RWPE1 (cell line): ENCODE measurements at regions of chr3 and their contacts with region 1.

Region 1: DNA sequence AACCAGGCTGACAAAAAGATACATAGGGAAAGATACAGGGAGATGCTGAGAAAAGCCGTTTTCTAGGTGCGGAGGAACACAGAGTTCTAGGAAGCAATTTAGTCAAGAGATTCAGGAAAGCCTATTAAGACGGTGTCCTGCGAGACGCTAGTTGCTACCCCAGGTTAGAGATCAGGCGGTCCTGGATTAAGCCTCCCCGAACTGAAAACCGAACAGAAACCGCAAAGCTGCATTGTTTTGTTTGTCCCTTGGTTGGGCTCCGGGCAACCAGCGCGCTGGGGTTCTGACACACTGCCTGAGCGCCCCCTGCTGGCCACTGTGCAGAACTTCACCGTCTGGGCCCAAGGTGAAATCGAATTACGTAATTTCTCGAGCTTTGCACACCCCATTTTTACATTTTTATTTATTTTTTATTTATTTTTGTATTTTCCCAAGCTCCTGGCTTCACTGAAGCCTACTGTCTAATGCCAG is 37.3 kb upstream of the NDUFB4 start:
- DNase-seq: peak; percentile 78
- H3K27ac ChIP-seq: peak overlapping the region; percentile 59
- CTCF ChIP-seq: peak; percentile 94

Region 2: GRCh38 chr3:120245386-120245785 is 313.4 kb before region 1 on chr3:
- CTCF ChIA-PET with region 1: interaction called, 15 read pairs
- POLR2A ChIA-PET with region 1: no interaction called
- DNase-seq: no peak
- H3K27ac ChIP-seq: no peak overlapping the region
- CTCF ChIP-seq: no peak

Region 3: DNA sequence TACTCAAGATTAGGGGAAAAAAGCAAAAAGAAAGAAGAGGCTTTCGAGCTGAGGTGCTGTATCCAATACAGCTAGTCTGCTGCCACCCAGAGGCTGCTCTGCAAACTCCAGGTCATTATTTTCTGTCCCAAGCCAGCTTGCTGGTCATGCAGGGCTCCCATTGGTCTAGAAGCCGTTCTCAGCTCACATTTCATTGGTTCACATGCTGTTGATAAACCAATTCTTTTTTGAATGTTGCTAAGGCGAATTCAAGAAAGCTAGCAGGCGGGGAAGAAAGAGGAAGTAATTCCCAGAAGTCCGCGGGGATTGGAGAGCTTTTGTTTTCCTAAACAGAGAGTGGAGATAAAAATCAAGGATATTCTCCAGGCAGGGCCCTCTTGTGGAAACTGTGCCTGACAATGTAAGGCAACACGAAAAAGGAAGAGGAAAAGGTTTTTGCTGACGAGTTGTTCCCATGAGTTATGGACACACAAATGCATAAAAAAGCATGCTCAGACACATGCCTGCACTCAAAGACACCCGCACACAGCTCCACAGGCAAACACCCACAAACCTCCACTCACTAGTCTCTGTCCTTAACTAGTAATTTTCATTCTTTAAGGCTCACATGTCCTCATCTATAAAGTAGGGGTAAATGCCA is 141.4 kb before region 1 on chr3:
- CTCF ChIA-PET with region 1: interaction called, 54 read pairs
- POLR2A ChIA-PET with region 1: no interaction called
- DNase-seq: peak; percentile 97
- H3K27ac ChIP-seq: peak overlapping the region; percentile 57
- CTCF ChIP-seq: peak; percentile 89